Gastrocnemius medialis (tissue), 4 donors: ENCODE measurements at regions of chr13 and their contacts with region 1.

Region 1: GRCh38 chr13:48595431-48596429 is 58.0 kb upstream of the CYSLTR2 start:
- DNase-seq: peak in 1 of 2 donors; percentile 25
- ATAC-seq: peak in 1 of 2 donors; percentile 33
- H3K4me3 ChIP-seq: no peak overlapping the region
- H3K27ac ChIP-seq: no peak overlapping the region
- H3K4me1 ChIP-seq: no peaks in the 10 kb centered on the region
- H3K27me3 ChIP-seq: no peaks in the 10 kb centered on the region
- CTCF ChIP-seq: peak in 4 of 5 experiments; percentile 9 to 46 (median 32)
- POLR2A ChIP-seq: no peak

Region 2: GRCh38 chr13:48126944-48127830 is 468.5 kb before region 1 on chr13:
- in situ Hi-C with region 1: loop called in 2 of 4 experiments (anchors 25 kb)
- intact Hi-C with region 1: no loop called
- DNase-seq: peak; percentile 43 to 72
- ATAC-seq: peak; percentile 73 to 79
- H3K4me3 ChIP-seq: no peak overlapping the region
- H3K27ac ChIP-seq: peak overlapping the region; percentile 27 to 80 (median 73)
- H3K4me1 ChIP-seq: peaks cover 12 to 33% of the 10 kb centered on the region in 2 donors
- H3K27me3 ChIP-seq: no peaks in the 10 kb centered on the region
- CTCF ChIP-seq: peak; percentile 53 to 74 (median 72)
- POLR2A ChIP-seq: no peak

Region 3: DNA sequence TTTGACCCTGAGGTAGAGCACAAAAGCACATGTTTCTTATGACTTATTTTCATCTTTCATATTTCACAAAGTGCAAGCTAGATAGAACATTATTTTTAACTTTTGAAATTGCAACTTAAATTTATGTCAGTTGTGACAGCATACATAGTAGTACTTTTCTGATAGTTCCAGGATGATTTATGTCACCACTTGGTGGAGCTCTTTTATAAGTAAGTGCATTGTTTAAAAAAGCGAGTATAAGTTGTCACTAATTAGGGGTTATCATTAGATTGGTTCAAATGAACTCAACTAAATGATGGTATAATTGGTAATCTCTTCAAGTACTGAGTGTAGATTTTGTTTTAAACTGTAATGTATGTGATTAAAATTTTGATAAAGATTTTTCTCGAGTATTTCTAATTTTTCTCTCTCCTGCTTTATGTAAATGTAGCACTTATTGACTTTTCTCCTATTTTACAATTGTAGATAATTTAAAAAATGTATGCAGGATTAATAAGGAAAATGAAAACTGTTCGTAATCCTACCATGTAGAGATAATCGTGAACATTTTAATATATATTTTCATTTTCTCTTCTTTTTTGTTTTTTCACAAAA is 261.1 kb before region 1 on chr13:
- in situ Hi-C with region 1: loop called in 1 of 4 experiments (anchors 25 kb)
- intact Hi-C with region 1: no loop called
- DNase-seq: no peak
- ATAC-seq: peak in 1 of 2 donors; percentile 51
- H3K4me3 ChIP-seq: no peak overlapping the region
- H3K27ac ChIP-seq: no peak overlapping the region
- H3K4me1 ChIP-seq: peaks cover 4% of the 10 kb centered on the region in 2 donors
- H3K27me3 ChIP-seq: no peaks in the 10 kb centered on the region
- CTCF ChIP-seq: peak in 4 of 5 experiments; percentile 21 to 64 (median 61)
- POLR2A ChIP-seq: no peak

Region 4: DNA sequence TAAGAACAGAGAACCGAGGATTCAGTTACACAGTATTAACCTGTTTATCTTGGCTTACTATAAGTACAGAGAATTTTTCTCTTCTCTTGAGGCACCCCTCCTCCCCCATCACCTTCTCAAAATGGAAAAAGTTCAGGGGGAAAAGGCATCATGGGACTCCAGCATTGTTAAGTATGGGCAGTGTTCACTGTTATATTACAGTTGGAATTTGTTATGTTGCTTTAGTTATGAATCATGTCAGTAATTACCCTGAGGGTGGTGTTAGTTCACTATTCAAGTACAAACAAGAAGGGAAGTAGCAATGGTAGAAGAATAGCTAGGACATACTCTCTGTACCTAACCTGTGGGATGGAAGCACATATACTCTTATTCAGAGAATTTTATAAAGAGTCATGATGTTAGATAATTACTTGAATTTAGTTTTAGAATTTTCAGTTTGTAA is 194.9 kb before region 1 on chr13:
- in situ Hi-C with region 1: loop called in 1 of 4 experiments (anchors 25 kb)
- intact Hi-C with region 1: no loop called
- DNase-seq: no peak
- ATAC-seq: peak; percentile 71 to 79
- H3K4me3 ChIP-seq: no peak overlapping the region
- H3K27ac ChIP-seq: peak overlapping the region; percentile 44 to 71 (median 70)
- H3K4me1 ChIP-seq: peaks cover 0 to 14% of the 10 kb centered on the region in 2 donors
- H3K27me3 ChIP-seq: no peaks in the 10 kb centered on the region
- CTCF ChIP-seq: no peak
- POLR2A ChIP-seq: no peak

Region 5: DNA sequence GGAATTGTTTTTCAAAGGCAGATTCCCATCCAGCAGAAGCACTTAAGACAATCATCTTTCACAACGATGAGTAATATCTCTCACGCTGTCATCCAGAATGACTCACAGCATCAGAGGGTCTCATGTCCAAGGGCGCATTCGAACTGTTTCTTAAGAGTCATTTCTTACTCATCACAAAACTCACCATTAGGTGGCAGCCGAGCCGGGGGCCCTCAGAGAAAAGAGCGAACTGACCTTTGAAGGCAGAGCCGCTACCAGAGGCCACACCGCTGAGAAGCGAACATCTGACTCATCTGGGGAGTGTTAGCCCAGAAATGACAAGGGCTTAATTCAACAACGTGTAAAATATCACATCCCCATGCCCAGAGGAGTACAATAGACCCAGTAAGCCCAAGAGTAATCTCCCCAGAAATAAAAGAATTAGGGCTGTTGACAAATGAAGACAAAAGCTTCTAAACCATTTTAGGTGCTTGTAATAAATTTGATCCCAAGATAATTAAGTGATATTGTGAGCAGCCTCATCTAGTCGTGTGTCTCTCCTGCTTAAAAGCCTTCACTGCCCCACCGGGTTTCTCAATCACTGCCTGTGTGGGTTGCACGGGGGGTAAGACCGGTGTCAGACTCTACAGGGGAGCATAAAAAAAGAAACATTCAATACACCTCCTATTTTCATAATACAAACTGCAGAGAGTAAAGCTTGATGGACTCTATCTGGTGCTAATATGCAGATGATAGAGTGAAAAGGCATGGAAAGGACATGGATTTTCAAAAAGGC is 154.2 kb after region 1 on chr13:
- in situ Hi-C with region 1: loop called in 1 of 4 experiments (anchors 10 kb)
- intact Hi-C with region 1: no loop called
- DNase-seq: peak; percentile 57 to 85
- ATAC-seq: peak; percentile 88 to 93
- H3K4me3 ChIP-seq: no peak overlapping the region
- H3K27ac ChIP-seq: peak overlapping the region; percentile 61 to 67 (median 64)
- H3K4me1 ChIP-seq: peaks cover 12 to 13% of the 10 kb centered on the region in 2 donors
- H3K27me3 ChIP-seq: no peaks in the 10 kb centered on the region
- CTCF ChIP-seq: peak in 4 of 5 experiments; percentile 27 to 53 (median 32)
- POLR2A ChIP-seq: no peak

Region 6: DNA sequence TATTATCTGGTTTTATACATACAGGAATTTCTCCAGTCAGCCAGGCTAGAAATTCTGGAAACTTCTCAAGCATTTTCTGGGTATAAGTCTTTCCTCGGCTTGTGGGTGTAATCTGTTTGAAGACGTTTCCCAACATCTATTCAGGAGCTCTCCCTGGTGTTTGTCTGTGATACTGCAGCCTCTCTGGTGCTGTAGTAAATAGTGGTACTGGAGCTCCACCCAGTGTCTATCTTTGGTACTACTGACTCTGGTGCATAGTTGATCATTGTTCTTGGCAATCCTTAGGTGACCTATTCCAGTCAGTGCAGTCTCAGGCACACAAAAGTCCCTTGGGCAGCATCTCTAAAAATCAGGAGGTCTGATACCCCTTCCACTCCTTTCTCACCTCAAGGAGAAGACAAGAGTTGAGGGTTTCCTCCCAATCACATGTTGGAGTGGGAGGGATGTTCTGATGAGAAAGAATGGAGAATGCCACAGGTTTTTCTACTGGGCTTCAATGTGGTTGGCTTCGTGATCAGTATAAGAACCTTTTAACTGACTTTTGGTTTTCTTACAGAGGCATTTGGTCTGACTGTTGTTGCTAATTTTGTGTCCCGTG is 173.5 kb after region 1 on chr13:
- in situ Hi-C with region 1: loop called in 3 of 4 experiments (anchors 5 to 10 kb)
- intact Hi-C with region 1: no loop called
- DNase-seq: peak; percentile 51 to 73
- ATAC-seq: peak; percentile 97 to 99
- H3K4me3 ChIP-seq: no peak overlapping the region
- H3K27ac ChIP-seq: no peak overlapping the region
- H3K4me1 ChIP-seq: no peaks in the 10 kb centered on the region
- H3K27me3 ChIP-seq: no peaks in the 10 kb centered on the region
- CTCF ChIP-seq: peak; percentile 92 to 99 (median 93)
- POLR2A ChIP-seq: no peak

Region 7: DNA sequence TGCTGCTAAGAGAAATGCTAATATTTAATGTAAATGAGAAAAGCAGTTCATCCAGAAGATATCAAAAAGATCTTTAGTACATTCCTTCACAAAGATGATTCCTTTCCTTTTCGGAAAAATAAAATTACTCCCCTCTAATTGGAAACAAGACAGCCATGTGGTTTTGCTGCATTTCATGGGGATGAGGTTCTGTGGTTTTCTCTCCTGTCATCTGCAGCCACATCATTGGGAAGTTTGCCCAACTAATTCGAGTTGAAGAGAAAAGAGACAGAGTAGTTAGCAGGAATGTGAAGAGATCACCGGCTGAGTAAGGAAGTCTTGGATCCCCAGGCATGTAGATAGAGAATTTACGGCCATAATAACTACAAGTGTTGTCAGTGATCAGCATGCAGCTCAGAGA is 180.1 kb after region 1 on chr13:
- in situ Hi-C with region 1: loop called in 1 of 4 experiments (anchors 5 kb)
- intact Hi-C with region 1: no loop called
- DNase-seq: no peak
- ATAC-seq: no peak
- H3K4me3 ChIP-seq: no peak overlapping the region
- H3K27ac ChIP-seq: no peak overlapping the region
- H3K4me1 ChIP-seq: no peaks in the 10 kb centered on the region
- H3K27me3 ChIP-seq: no peaks in the 10 kb centered on the region
- CTCF ChIP-seq: no peak
- POLR2A ChIP-seq: no peak